ENCODE measurements at regions of chr20 and their contacts with region 1.

Region 1: DNA sequence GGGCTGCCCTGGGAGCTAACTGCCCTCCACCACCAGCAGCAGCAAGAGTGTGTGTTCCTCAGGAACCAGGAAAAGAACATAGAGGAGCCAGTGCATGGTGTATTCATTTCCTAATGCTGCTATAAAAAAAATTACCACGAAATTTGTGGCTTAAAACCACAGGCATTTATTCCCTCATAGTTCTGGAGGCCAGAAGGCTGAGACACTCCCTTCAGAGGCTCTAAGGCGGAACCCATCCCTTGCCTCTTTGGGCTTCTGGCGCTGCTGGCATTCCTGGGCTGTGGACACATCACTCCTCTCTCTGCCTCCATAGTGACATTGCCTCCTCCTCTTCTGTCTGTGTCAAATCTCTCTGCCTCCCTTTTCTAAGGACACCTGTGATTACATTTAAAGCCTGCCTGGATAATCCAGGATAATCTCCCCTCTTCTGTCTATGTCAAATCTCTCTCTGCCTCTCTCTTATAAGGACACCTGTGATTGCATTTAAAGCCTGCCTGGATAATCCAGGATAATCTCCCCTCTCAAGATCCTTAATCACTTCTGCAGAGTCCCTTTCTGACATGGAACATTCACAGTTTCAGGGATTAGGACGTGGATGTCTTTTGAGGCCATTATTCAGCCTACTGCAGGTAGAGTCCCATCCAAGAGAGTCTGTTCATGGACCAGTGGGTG is 54.7 kb downstream of the NDUFAF5 start:
- DNase-seq: no peak
- ATAC-seq: no peak
- H3K4me3 Mint-ChIP-seq: no peak overlapping the region
- H3K27ac Mint-ChIP-seq: no peak overlapping the region
- H3K4me1 Mint-ChIP-seq: no peaks in the 10 kb centered on the region
- H3K27me3 Mint-ChIP-seq: peaks cover 10% of the 10 kb centered on the region

Region 2: GRCh38 chr20:13909067-13909466 is 69.5 kb after region 1 on chr20:
- CTCF ChIA-PET with region 1: no interaction called
- POLR2A ChIA-PET with region 1: no interaction called
- intact Hi-C with region 1: loop called in 1 of 2 experiments (anchors 10 kb)
- DNase-seq: no peak
- ATAC-seq: no peak
- H3K4me3 Mint-ChIP-seq: no peak overlapping the region
- H3K27ac Mint-ChIP-seq: no peak overlapping the region
- H3K4me1 Mint-ChIP-seq: no peaks in the 10 kb centered on the region
- H3K27me3 Mint-ChIP-seq: peaks cover 3% of the 10 kb centered on the region